HEK293 (cell line): ENCODE measurements at regions of chr10 and their contacts with region 1.

Region 1: DNA sequence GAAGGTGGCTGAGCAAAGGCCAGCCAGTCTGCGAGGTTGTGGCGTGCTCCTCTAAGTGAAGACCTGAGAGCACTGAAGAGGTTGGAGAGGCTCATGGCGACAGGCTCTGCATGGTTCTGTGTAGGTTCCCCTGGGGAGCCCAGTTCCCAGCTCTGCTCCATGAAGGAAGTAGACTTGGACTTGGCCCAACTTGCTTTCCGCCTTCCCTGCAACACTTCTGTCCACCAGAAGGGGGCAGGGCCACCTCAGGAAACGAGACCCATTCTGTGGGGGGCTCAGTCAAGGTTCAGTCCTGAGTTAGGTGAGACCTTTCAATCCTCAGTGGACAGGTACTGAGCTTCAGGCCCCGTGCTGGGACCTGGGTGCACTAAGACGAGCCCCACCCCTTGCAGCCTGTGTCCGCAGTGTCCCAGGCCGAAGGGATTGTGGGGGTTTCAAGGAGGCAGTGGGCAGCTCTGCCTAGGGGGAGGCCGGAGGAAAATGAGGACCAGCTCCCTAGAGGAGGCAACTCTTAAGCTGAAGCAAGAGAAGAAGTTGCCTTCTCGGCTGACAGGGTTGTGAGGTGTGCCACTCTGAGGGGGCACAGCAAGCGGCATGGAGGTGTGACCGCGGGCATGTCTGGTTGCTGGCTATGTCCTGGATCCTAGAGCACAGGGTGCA is 15.0 kb upstream of the PCBD1 start:
- H3K4me3 ChIP-seq: no peak overlapping the region
- H3K27ac ChIP-seq: no peak overlapping the region
- H3K4me1 ChIP-seq: no peaks in the 10 kb centered on the region
- CTCF ChIP-seq: peak; percentile 83

Region 2: DNA sequence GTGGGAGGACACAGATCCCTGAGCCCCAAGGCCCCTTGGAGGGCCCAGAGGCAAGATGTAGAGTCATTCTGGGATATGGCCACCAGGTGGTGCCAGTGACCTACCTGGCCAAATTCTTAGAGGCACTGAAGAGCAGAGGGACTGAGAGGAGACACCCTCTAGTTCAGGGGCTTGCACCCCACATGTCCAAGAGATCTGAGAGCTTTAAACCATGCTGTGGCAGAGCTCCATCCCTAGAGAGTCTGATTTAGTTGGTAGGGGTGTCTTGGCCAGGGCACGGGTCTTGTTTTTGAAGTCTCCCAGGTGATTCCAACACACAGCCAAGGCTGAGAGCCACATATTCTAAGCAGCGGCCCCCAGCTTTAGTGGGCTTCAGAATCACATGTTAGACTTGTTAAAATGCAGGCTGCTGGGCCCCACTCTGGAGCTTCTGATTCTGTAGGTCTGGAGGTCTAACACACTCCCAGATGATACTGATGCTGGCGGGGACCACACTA is 353.4 kb before region 1 on chr10:
- CTCF ChIA-PET with region 1: interaction called, 12 read pairs
- POLR2A ChIA-PET with region 1: no interaction called
- H3K4me3 ChIP-seq: no peak overlapping the region
- H3K27ac ChIP-seq: no peak overlapping the region
- H3K4me1 ChIP-seq: 0 out of 2 replicates have a peak, but pooled peaks cover 2% of the 10 kb centered on the region
- CTCF ChIP-seq: peak; percentile 82

Region 3: GRCh38 chr10:70920565-70920964 is 17.2 kb after region 1 on chr10:
- CTCF ChIA-PET with region 1: interaction called, 29 read pairs
- POLR2A ChIA-PET with region 1: no interaction called
- H3K4me3 ChIP-seq: no peak overlapping the region
- H3K27ac ChIP-seq: no peak overlapping the region
- H3K4me1 ChIP-seq: no peaks in the 10 kb centered on the region
- CTCF ChIP-seq: no peak

Region 4: GRCh38 chr10:71048971-71049615 is 145.7 kb after region 1 on chr10:
- CTCF ChIA-PET with region 1: no interaction called
- POLR2A ChIA-PET with region 1: no interaction called
- H3K4me3 ChIP-seq: no peak overlapping the region
- H3K27ac ChIP-seq: no peak overlapping the region
- H3K4me1 ChIP-seq: no peaks in the 10 kb centered on the region
- CTCF ChIP-seq: no peak

Region 5: DNA sequence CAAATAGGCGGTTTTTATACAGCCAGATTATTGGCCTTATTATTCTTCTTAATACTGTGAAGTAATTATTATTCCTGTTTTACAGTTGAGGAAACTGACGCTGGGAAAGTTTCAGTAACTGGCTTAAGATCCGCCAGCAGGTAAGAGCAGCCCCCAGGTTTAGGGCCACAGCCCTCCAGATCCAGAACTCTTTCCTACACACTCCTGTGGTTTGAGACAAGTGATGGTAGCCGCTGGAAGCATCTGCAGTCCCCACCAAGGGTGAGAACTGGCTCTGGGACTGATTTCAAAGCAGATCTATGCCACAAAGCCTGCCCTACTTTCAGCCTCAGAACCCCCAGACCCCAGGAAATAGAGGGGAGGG is 305.9 kb after region 1 on chr10:
- CTCF ChIA-PET with region 1: interaction called, 10 read pairs
- POLR2A ChIA-PET with region 1: no interaction called
- H3K4me3 ChIP-seq: no peak overlapping the region
- H3K27ac ChIP-seq: no peak overlapping the region
- H3K4me1 ChIP-seq: peaks cover 13% of the 10 kb centered on the region
- CTCF ChIP-seq: no peak

Region 6: DNA sequence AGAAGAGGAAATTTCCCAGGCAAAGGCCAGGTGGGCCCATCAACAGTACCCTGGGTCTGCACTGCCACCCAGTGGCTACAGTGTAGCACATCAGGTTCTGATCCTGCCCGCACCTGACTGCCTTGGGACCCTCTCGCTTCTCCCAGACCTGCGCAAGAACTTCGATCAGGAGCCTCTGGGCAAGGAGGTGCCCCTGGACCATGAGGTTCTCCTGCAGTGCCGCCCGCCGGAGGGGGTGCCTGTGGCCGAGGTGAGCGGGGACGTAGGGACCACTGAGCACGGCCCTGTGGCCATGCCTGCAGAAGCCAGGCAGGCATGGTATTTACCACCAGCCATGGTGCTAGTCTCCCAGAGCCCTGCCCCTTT is 381.8 kb after region 1 on chr10:
- CTCF ChIA-PET with region 1: interaction called, 64 read pairs
- POLR2A ChIA-PET with region 1: no interaction called
- H3K4me3 ChIP-seq: no peak overlapping the region
- H3K27ac ChIP-seq: no peak overlapping the region
- H3K4me1 ChIP-seq: no peaks in the 10 kb centered on the region
- CTCF ChIP-seq: peak; percentile 68; the same call in 1 of the 2 replicates